ENCODE measurements at regions of chr6 and their contacts with region 1.

Region 1: GRCh38 chr6:66226109-66226508 is 519.1 kb upstream of the EYS start:
- DNase-seq: no peak
- H3K4me3 ChIP-seq: no peak overlapping the region
- H3K27ac ChIP-seq: no peak overlapping the region
- H3K4me1 ChIP-seq: no peaks in the 10 kb centered on the region
- H3K27me3 ChIP-seq: no peaks in the 10 kb centered on the region
- CTCF ChIP-seq: no peak
- POLR2A ChIP-seq: no peak

Region 2: DNA sequence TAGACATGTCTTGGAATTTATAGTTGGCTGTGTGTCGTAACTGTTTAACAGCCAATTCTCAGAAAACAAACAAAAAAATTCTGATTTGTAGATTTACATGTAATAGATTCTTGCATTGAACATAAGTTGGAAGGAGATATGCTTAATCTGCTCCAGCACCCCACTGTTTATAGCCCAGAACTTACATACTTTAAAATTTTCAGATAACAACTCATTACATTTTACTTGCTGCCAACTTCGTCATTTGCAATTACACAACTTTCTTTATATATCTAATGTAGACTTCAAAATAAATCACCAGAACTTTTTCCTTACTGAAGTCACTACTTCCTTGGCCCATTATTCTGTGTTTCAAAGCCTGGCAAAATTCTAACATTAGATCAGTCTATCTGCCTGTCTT is 46.7 kb before region 1 on chr6:
- intact Hi-C with region 1: no loop called
- DNase-seq: no peak
- H3K4me3 ChIP-seq: no peak overlapping the region
- H3K27ac ChIP-seq: no peak overlapping the region
- H3K4me1 ChIP-seq: no peaks in the 10 kb centered on the region
- H3K27me3 ChIP-seq: no peaks in the 10 kb centered on the region
- CTCF ChIP-seq: no peak
- POLR2A ChIP-seq: no peak

Region 3: GRCh38 chr6:66265737-66266136 is 39.6 kb after region 1 on chr6:
- intact Hi-C with region 1: loop called (anchors 5 kb)
- DNase-seq: no peak
- H3K4me3 ChIP-seq: no peak overlapping the region
- H3K27ac ChIP-seq: no peak overlapping the region
- H3K4me1 ChIP-seq: no peaks in the 10 kb centered on the region
- H3K27me3 ChIP-seq: no peaks in the 10 kb centered on the region
- CTCF ChIP-seq: no peak
- POLR2A ChIP-seq: no peak